MCF 10A (cell line): ENCODE measurements at regions of chr11 and their contacts with region 1.

Region 1: DNA sequence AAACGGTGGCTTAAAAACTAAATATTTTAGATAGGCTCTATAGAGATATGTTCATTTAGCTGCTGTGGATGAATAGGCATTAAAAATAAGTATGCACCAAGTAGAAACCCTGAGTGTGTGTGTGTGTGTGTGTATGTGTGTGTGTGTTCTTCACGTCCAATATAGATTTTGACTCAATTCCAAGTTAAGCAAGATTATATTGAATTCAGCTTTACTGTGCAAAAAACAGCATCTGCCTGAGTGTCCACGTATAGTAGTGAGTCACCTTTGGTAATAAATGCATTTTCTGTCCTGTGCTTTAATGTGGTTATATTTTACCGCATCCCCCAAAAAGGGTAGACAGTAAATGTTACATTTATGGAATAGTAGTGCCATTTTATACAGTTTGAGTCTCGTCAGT is 71.2 kb downstream of the PDHX start:
- DNase-seq: no peak
- H3K4me3 Mint-ChIP-seq: no peak overlapping the region
- H3K27ac Mint-ChIP-seq: no peak overlapping the region
- H3K4me1 Mint-ChIP-seq: peaks cover 11% of the 10 kb centered on the region
- H3K27me3 Mint-ChIP-seq: no peaks in the 10 kb centered on the region
- CTCF ChIP-seq: no peak

Region 2: GRCh38 chr11:34869426-34869825 is 118.2 kb before region 1 on chr11:
- CTCF ChIA-PET with region 1: no interaction called
- POLR2A ChIA-PET with region 1: no interaction called
- intact Hi-C with region 1: no loop called
- DNase-seq: peak; percentile 14
- H3K4me3 Mint-ChIP-seq: no peak overlapping the region
- H3K27ac Mint-ChIP-seq: no peak overlapping the region
- H3K4me1 Mint-ChIP-seq: peaks cover 12% of the 10 kb centered on the region
- H3K27me3 Mint-ChIP-seq: no peaks in the 10 kb centered on the region
- CTCF ChIP-seq: no peak

Region 3: GRCh38 chr11:34977089-34977906 is 10.3 kb before region 1 on chr11:
- CTCF ChIA-PET with region 1: no interaction called
- POLR2A ChIA-PET with region 1: interaction called, 11 read pairs
- intact Hi-C with region 1: no loop called
- DNase-seq: peak; percentile 58
- H3K4me3 Mint-ChIP-seq: peak overlapping the region; percentile 35
- H3K27ac Mint-ChIP-seq: peak overlapping the region; percentile 89
- H3K4me1 Mint-ChIP-seq: peaks cover 39% of the 10 kb centered on the region
- H3K27me3 Mint-ChIP-seq: no peaks in the 10 kb centered on the region
- CTCF ChIP-seq: no peak